HCT116 (cell line): ENCODE measurements at regions of chr12 and their contacts with region 1.

Region 1: DNA sequence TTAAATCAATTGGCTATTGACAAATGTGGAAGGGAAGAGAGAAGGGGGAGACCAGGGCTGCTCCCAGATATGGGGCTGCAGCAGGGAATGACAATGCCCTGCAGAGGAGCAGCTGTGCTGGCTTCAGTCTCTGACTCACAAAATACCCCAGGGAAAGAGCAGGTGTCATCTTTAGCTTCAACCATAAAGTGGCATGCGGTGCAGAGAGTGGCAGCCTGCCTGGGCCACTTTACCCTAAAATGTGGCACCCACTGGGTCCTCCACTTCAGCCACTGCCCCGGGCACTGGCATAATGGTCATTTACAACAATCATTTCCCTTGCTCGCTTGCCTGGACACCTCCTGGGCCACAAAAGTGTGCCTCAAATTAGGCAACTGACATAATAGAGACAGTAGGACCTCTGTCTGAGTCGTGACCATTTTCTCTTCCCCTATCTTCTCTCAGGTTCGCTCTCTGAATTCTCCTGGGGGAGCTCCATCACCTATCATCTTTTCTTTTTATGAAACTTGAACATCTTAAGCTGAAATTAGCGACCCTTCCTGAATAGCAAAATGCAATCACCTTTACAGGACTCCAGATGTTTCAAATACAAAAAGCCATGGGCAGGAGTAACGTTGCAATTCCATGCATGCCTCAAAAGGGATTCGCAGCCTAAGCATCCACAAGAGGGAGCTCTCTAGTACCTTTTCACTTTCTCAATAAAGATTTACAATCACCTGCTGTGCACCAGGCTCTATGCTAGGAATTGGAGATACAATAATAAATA is 179.9 kb upstream of the ATF7IP start:
- DNase-seq: peak; percentile 39
- ATAC-seq: peak; percentile 88
- H3K4me3 ChIP-seq: no peak overlapping the region
- H3K27ac ChIP-seq: no peak overlapping the region
- H3K4me1 ChIP-seq: no peaks in the 10 kb centered on the region
- H3K27me3 ChIP-seq: no peaks in the 10 kb centered on the region
- CTCF ChIP-seq: peak; percentile 64 to 78 (median 75); a peak in 5 of 6 replicates
- POLR2A ChIP-seq: no peak
- RAD21 ChIP-seq: peak; percentile 83

Region 2: GRCh38 chr12:13913371-13913770 is 272.2 kb before region 1 on chr12:
- CTCF ChIA-PET with region 1: no interaction called
- POLR2A ChIA-PET with region 1: no interaction called
- RAD21 ChIA-PET with region 1: no interaction called
- intact Hi-C with region 1: no loop called
- DNase-seq: no peak
- ATAC-seq: peak; percentile 44
- H3K4me3 ChIP-seq: no peak overlapping the region
- H3K27ac ChIP-seq: no peak overlapping the region
- H3K4me1 ChIP-seq: no peaks in the 10 kb centered on the region
- H3K27me3 ChIP-seq: no peaks in the 10 kb centered on the region
- CTCF ChIP-seq: peak; percentile 7 to 17 (median 10); a peak in 1 of 6 replicates
- POLR2A ChIP-seq: no peak
- RAD21 ChIP-seq: 0 out of 2 replicates have a peak, but pooled peaks have one; percentile 24

Region 3: GRCh38 chr12:14454098-14454907 is 268.7 kb after region 1 on chr12:
- CTCF ChIA-PET with region 1: interaction called, 8 read pairs
- POLR2A ChIA-PET with region 1: no interaction called
- RAD21 ChIA-PET with region 1: interaction called in 1 of 2 experiments, 3 read pairs
- intact Hi-C with region 1: loop called (anchors 5 kb)
- DNase-seq: peak; percentile 59
- ATAC-seq: peak; percentile 88
- H3K4me3 ChIP-seq: no peak overlapping the region
- H3K27ac ChIP-seq: no peak overlapping the region
- H3K4me1 ChIP-seq: no peaks in the 10 kb centered on the region
- H3K27me3 ChIP-seq: no peaks in the 10 kb centered on the region
- CTCF ChIP-seq: peak; percentile 86 to 98 (median 88)
- POLR2A ChIP-seq: no peak
- RAD21 ChIP-seq: peak; percentile 91

Region 4: GRCh38 chr12:14664510-14664909 is 478.9 kb after region 1 on chr12:
- CTCF ChIA-PET with region 1: interaction called, 3 read pairs
- POLR2A ChIA-PET with region 1: no interaction called
- RAD21 ChIA-PET with region 1: no interaction called
- intact Hi-C with region 1: loop called (anchors 2 kb)
- DNase-seq: peak; percentile 37
- ATAC-seq: peak; percentile 75
- H3K4me3 ChIP-seq: no peak overlapping the region
- H3K27ac ChIP-seq: no peak overlapping the region
- H3K4me1 ChIP-seq: no peaks in the 10 kb centered on the region
- H3K27me3 ChIP-seq: no peaks in the 10 kb centered on the region
- CTCF ChIP-seq: peak; percentile 42 to 78 (median 68); a peak in 5 of 6 replicates
- POLR2A ChIP-seq: no peak
- RAD21 ChIP-seq: peak; percentile 84